ENCODE measurements at regions of chr1 and their contacts with region 1.

Region 1: GRCh38 chr1:16078925-16079656 is 5.6 kb upstream of the FAM131C start:
- DNase-seq: peak; percentile 82
- H3K4me3 Mint-ChIP-seq: peak overlapping the region; percentile 63
- H3K27ac Mint-ChIP-seq: peak overlapping the region; percentile 87
- H3K4me1 Mint-ChIP-seq: peaks cover 16% of the 10 kb centered on the region
- H3K27me3 Mint-ChIP-seq: peaks cover 6% of the 10 kb centered on the region

Region 2: DNA sequence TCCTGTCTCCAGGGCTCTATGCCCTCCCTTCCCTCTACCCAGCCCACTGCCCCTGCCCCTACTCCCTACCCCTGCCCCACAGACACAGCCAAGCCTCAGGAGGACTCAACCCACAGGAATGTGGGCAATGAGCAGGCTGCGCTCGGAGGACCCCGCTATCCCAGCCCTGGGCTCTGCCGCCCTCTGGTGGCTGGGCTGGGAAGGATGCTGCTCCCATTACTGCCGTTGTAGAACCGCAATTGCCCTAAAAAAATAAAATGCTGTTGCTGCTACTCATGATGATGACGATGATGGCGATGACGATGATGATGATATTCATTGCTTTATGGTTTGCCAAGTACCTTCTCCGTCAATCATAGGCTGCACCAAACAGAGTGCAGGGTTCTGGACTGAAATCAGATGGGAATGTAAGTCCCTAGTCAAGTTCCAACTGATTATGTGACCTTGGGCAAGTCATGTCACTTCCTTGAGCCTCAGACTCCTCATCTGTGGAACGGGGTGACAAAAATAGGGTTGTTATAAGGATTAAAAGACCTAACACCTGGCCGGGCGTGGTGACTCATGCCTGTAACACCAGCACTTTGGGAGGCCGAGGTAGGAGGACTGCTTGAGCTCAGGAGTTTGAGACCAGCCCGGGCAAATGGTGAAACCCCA is 108.8 kb after region 1 on chr1:
- CTCF ChIA-PET with region 1: interaction called, 207 read pairs
- POLR2A ChIA-PET with region 1: interaction called, 14 read pairs
- DNase-seq: peak; percentile 78
- H3K4me3 Mint-ChIP-seq: no peak overlapping the region
- H3K27ac Mint-ChIP-seq: no peak overlapping the region
- H3K4me1 Mint-ChIP-seq: peaks cover 5% of the 10 kb centered on the region
- H3K27me3 Mint-ChIP-seq: peaks cover 14% of the 10 kb centered on the region

Region 3: GRCh38 chr1:16199157-16199501 is 120.0 kb after region 1 on chr1:
- CTCF ChIA-PET with region 1: interaction called, 11 read pairs
- POLR2A ChIA-PET with region 1: no interaction called
- DNase-seq: no peak
- H3K4me3 Mint-ChIP-seq: no peak overlapping the region
- H3K27ac Mint-ChIP-seq: no peak overlapping the region
- H3K4me1 Mint-ChIP-seq: peaks cover 9% of the 10 kb centered on the region
- H3K27me3 Mint-ChIP-seq: no peaks in the 10 kb centered on the region

Region 4: DNA sequence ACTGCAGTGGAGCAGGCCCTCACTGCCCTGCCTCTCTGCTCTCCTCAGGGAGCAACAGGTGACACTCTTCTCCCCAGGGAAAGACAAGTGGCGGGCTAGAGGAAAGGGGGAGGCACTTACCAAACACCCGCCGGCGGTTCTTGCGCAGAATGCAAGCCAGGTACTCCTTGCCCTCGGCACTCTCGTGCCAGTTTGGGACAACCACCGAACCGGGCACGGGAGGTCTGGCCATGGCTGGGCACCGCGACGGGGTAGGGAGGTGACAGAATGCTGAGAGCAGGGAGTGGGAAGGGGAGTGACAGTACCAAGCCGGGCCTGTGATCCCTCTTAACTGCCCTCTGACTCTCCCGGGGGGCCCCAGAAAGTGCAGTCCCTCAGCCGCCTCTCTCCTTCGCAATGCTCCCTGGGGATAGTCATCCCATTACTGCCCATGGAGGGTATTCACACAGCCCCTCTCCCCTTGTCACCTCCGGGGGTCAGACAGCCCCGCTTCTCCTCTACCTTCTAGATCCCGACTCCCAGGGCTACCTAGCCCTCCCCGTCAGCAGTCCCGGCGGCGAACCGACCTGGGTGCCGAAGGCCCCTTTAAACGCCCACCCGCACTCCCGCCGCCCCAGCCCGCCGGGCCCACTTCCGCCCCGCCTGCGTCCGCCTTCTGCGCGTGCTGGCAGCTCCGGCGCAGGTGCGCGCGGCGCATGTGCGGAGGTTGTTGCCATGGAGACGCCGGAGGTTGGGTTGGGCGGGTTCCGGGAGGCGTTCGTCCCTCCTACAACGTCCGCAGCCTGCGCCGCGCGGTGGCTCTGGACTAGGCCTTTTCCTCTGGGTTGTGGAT is 157.6 kb after region 1 on chr1 and contains the start of gene CPLANE2:
- CTCF ChIA-PET with region 1: interaction called, 10 read pairs
- POLR2A ChIA-PET with region 1: no interaction called
- DNase-seq: peak; percentile 97
- H3K4me3 Mint-ChIP-seq: peak within 1 kb of the TSS; percentile 79
- H3K27ac Mint-ChIP-seq: peak within 1 kb of the TSS; percentile 82
- H3K4me1 Mint-ChIP-seq: peaks cover 43% of the 10 kb centered on the region
- H3K27me3 Mint-ChIP-seq: no peaks in the 10 kb centered on the region
- total RNA-seq, gene CPLANE2: 7.9 to 8.7 TPM

Region 5: GRCh38 chr1:16243936-16244649 is 165.0 kb after region 1 on chr1:
- CTCF ChIA-PET with region 1: interaction called, 31 read pairs
- POLR2A ChIA-PET with region 1: interaction called, 3 read pairs
- DNase-seq: peak; percentile 81
- H3K4me3 Mint-ChIP-seq: no peak overlapping the region
- H3K27ac Mint-ChIP-seq: no peak overlapping the region
- H3K4me1 Mint-ChIP-seq: peaks cover 18% of the 10 kb centered on the region
- H3K27me3 Mint-ChIP-seq: no peaks in the 10 kb centered on the region

Region 6: DNA sequence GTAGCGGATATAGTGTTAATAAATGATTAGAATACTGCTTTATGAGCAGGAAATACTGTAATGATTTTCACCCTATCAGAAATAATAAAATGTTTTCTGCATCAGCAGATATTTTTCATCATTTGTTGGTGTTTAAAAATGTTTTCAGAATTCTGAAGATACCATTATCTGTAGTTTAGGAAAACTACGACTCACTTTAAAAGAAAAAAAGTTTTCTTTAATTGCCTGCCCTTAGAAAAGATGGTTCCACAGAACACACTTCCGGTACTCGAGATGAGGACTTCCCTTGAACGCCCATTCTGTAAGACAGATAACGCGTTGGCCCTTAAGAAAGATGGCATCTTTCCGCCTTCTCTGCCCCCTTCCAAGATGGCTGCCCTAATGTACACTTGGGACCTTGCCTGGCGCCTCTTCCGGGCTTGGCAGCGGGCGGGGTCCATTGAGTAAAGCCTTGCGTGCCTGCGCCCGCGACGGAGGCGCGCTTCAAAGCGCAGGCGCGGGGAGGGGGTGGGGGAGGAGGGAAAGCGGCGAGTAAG is 287.7 kb after region 1 on chr1 and contains the start of gene SZRD1:
- CTCF ChIA-PET with region 1: interaction called, 33 read pairs
- POLR2A ChIA-PET with region 1: no interaction called
- DNase-seq: peak; percentile 98
- H3K4me3 Mint-ChIP-seq: peak within 1 kb of the TSS; percentile 97
- H3K27ac Mint-ChIP-seq: peak within 1 kb of the TSS; percentile 99
- H3K4me1 Mint-ChIP-seq: peaks cover 44% of the 10 kb centered on the region
- H3K27me3 Mint-ChIP-seq: no peaks in the 10 kb centered on the region
- total RNA-seq, gene SZRD1: 156 to 157 TPM